Dorsolateral prefrontal cortex (tissue), 120 donors: ENCODE measurements at regions of chr5 and their contacts with region 1.

Region 1: DNA sequence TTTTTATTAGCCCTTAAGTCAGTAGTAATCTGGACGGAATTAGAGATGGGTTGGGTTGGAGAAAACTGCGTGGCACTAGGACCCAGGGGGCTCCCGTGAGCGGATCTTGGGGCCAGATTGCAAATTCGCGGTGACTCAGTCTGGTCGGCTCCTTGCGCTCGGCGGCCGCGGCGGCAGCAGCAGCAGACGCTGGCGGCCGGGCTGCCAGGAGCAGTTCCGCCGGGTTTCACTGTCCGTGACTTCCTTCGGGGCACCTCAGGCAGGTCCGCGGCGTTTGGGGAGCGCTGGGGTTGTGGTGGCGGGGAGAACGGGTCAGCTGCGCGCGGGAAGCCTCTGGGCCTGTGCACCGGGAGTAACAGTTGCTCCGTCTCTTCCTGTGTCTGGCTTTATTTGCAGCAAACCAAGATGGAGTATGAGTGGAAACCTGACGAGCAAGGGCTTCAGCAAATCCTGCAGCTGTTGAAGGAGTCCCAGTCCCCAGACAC is 31.6 kb downstream of the TNPO1 start:
- DNase-seq: peak; percentile 92 to 97 (median 94)
- H3K4me3 ChIP-seq: peak overlapping the region; percentile 52 to 90 (median 80)
- H3K27ac ChIP-seq: peak overlapping the region; percentile 82 to 97 (median 94)
- H3K27me3 ChIP-seq: no peaks in the 10 kb centered on the region
- CTCF ChIP-seq: peak in 38 of 56 donors; percentile 7 to 55 (median 31)

Region 2: DNA sequence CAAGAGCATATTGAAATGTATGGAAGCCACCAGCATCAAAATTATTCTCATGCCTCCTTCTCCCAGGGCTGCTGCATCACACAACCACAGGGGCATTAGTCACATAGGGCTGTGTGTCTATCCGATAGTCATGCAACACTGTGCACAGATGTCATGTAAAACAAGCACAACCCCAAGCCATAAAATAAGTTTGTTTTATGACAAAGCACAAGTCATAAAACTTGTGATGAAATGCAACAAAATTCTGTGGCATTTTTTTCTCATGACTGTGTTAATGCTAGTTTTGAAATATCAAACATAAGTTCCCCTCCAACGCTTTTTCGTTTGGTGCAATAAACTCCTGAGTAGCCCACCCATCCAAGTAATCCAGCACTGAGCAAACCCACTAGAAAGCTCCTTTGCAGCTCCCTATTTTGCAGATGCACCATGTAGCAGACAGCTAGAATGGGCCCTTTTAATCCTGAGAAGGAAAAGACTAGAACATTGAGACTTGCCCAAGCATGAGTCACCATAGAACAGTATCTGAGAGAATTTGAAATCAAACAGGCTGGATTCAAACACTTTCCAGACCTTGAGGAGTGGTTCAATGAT is 247.5 kb before region 1 on chr5:
- intact Hi-C with region 1: loop called (anchors 10 kb)
- DNase-seq: no peak
- H3K4me3 ChIP-seq: no peak overlapping the region
- H3K27ac ChIP-seq: peak overlapping the region in 54 of 59 donors; percentile 5 to 89 (median 69)
- H3K27me3 ChIP-seq: no peaks in the 10 kb centered on the region
- CTCF ChIP-seq: no peak

Region 3: DNA sequence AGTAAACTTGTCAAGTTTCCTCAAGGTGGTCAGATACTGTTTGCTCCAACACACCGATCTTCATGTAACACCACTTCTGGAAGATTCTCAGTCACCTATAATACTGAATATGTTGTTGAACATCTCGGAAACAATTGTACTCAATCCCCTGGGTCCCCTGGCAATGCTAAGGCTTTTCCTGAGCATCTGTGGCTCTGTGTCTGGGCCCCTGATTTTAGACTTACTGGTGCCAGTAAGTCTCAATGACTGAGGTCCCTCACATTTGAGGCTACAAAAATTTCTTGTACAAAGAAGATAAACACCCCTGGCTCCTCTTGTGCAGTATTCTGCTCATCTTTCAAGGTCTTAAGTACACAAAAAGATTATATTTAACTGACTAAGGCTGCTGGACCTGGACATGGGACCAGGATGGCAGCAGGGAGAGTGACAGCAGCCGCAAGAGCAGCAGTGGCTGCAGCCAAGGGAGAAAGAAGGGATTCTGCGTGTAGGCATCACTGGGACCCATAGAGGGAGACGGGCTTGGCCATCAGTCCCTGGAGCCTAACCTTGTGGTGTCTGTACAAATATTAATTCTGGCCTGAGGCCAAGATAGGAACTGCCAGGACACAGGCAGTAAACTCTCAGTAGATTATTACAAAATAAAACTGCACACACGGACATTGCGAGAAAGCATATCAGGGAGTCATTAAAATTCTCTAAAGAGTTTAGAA is 80.6 kb before region 1 on chr5:
- intact Hi-C with region 1: no loop called
- DNase-seq: no peak
- H3K4me3 ChIP-seq: no peak overlapping the region
- H3K27ac ChIP-seq: no peak overlapping the region
- H3K27me3 ChIP-seq: no peaks in the 10 kb centered on the region
- CTCF ChIP-seq: no peak